Caco-2 (cell line): ENCODE measurements at regions of chr3 and their contacts with region 1.

Region 1: GRCh38 chr3:42012935-42013690 is 51.2 kb upstream of the ULK4 start:
- DNase-seq: peak; percentile 59 to 76
- H3K4me3 ChIP-seq: peak overlapping the region; percentile 89
- H3K4me3 Mint-ChIP-seq: peak overlapping the region; percentile 81
- H3K27ac Mint-ChIP-seq: peak overlapping the region; percentile 72
- H3K4me1 ChIP-seq: 0 out of 2 replicates have a peak, but pooled peaks cover 9% of the 10 kb centered on the region
- H3K4me1 Mint-ChIP-seq: peaks cover 21% of the 10 kb centered on the region
- H3K27me3 ChIP-seq: no peaks in the 10 kb centered on the region; the same call in 1 of the 2 replicates
- H3K27me3 Mint-ChIP-seq: no peaks in the 10 kb centered on the region
- CTCF ChIP-seq: no peak

Region 2: GRCh38 chr3:41975421-41976103 is 37.6 kb before region 1 on chr3:
- CTCF ChIA-PET with region 1: no interaction called
- POLR2A ChIA-PET with region 1: no interaction called
- intact Hi-C with region 1: no loop called
- DNase-seq: no peak
- H3K4me3 ChIP-seq: no peak overlapping the region
- H3K4me3 Mint-ChIP-seq: no peak overlapping the region
- H3K27ac Mint-ChIP-seq: no peak overlapping the region
- H3K4me1 ChIP-seq: no peaks in the 10 kb centered on the region
- H3K4me1 Mint-ChIP-seq: no peaks in the 10 kb centered on the region
- H3K27me3 ChIP-seq: no peaks in the 10 kb centered on the region
- H3K27me3 Mint-ChIP-seq: no peaks in the 10 kb centered on the region
- CTCF ChIP-seq: no peak

Region 3: DNA sequence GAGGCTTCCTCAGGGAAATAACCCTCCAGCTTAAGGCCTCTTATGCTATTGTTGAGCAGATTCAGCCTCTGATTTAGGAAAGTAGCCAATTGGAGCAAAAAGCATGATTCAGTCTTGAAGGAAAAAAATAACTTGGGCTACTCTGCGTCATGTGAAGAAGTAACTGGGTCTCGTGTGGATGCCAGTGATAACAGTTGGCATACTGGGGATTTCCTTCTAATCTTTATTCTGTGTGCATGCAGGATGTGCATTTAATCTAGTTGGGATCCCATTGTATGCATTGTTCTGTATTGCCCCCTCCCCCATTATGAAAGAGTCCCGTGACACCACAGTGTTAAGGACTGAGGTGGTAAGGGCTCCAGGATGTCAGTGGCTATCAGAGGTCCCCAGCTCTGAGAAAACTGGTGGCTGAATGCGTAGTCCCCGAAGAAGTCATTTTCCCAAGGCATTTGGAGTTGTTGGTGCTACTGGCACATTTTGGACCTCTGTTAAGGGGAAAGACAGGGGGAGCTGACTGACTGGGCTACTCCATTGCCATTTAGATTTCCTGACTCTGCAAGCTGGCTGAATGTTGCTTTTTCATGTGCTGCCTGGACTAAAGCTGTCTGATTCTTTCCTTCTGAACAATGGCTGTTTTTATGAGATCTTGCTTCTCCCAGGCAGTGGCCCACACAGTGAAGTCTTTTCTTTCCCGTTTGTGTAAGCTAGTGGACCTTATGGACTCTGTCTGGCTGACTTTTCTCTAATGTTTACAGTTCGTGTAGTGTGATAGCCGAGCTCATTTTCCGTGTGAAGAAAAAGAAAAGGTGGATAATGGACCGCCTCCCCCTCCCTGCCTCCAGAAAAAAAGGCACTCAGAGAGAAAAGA is 39.6 kb after region 1 on chr3:
- CTCF ChIA-PET with region 1: no interaction called
- POLR2A ChIA-PET with region 1: no interaction called
- intact Hi-C with region 1: loop called (anchors 1 kb)
- DNase-seq: no peak
- H3K4me3 ChIP-seq: no peak overlapping the region
- H3K4me3 Mint-ChIP-seq: no peak overlapping the region
- H3K27ac Mint-ChIP-seq: peak overlapping the region; percentile 26
- H3K4me1 ChIP-seq: 0 out of 2 replicates have a peak, but pooled peaks cover 13% of the 10 kb centered on the region
- H3K4me1 Mint-ChIP-seq: peaks cover 24% of the 10 kb centered on the region
- H3K27me3 ChIP-seq: no peaks in the 10 kb centered on the region
- H3K27me3 Mint-ChIP-seq: no peaks in the 10 kb centered on the region
- CTCF ChIP-seq: no peak